ENCODE measurements at regions of chr5 and their contacts with region 1.

Region 1: GRCh38 chr5:172801184-172801671 is 30.2 kb upstream of the DUSP1 start:
- DNase-seq: peak in 1 of 2 donors; percentile 84
- H3K4me3 ChIP-seq: no peak overlapping the region
- H3K27ac ChIP-seq: peak overlapping the region; percentile 87 to 93
- H3K4me1 ChIP-seq: peaks cover 4 to 41% of the 10 kb centered on the region in 2 donors
- H3K27me3 ChIP-seq: no peaks in the 10 kb centered on the region
- CTCF ChIP-seq: no peak

Region 2: GRCh38 chr5:172932313-172933017 is 131.2 kb after region 1 on chr5:
- intact Hi-C with region 1: loop called (anchors 1 kb)
- DNase-seq: peak in 1 of 2 donors; percentile 91
- H3K4me3 ChIP-seq: peak overlapping the region in 1 of 2 donors; percentile 11
- H3K27ac ChIP-seq: peak overlapping the region; percentile 93 to 94
- H3K4me1 ChIP-seq: peaks cover 18 to 22% of the 10 kb centered on the region in 2 donors
- H3K27me3 ChIP-seq: no peaks in the 10 kb centered on the region
- CTCF ChIP-seq: peak; percentile 96 to 98 (median 97)